ENCODE measurements at regions of chr12 and their contacts with region 1.

Region 1: DNA sequence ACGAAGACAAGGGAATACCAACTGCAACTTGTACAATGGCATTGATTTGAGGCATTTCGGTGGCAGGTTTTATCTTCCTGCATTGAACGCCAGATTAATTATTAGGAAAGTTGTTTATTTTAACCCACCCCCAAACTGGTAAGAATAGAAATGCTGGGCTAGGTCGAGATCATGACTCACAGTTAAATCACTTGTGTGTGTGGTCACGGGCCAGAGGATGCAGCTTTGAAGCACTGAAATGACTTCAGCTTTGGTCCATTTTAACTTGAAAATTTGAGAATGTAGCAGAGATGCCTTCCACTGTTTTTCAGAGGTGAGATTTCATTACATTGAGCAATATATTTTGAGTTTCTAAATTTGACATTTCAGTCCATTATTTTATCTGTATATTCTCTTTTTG is 23.6 kb upstream of the KCNH3 start:
- DNase-seq: no peak
- ATAC-seq: no peak
- H3K4me3 ChIP-seq: no peak overlapping the region
- H3K27ac ChIP-seq: no peak overlapping the region
- H3K4me1 ChIP-seq: peaks cover 0 to 3% (median 0%) of the 10 kb centered on the region in 12 donors
- H3K27me3 ChIP-seq: no peaks in the 10 kb centered on the region
- CTCF ChIP-seq: no peak
- POLR2A ChIP-seq: no peak

Region 2: DNA sequence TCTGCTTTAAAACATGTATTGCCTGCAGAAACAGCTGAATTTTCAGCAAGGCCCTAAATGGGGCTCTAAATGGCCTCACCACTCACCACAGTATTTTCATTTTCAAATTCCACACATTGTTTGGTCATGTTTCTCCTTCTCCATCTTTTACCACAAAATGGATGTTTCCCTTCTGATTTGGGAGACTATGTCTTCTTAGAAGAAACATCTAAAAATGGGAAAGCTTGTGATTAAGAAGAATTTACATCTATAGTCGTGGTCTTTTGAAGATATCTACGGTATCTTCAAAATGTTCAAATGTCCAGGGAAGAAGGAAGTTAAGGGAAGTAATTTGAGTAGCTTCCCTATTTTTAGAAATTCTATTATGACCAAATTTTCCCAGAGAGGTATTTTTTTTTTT is 271.1 kb before region 1 on chr12:
- intact Hi-C with region 1: no loop called
- DNase-seq: no peak
- ATAC-seq: no peak
- H3K4me3 ChIP-seq: no peak overlapping the region
- H3K27ac ChIP-seq: peak overlapping the region in 4 of 12 donors; percentile 20 to 51 (median 36)
- H3K4me1 ChIP-seq: peaks cover 0 to 25% (median 0%) of the 10 kb centered on the region in 12 donors
- H3K27me3 ChIP-seq: no peaks in the 10 kb centered on the region
- CTCF ChIP-seq: no peak
- POLR2A ChIP-seq: no peak

Region 3: DNA sequence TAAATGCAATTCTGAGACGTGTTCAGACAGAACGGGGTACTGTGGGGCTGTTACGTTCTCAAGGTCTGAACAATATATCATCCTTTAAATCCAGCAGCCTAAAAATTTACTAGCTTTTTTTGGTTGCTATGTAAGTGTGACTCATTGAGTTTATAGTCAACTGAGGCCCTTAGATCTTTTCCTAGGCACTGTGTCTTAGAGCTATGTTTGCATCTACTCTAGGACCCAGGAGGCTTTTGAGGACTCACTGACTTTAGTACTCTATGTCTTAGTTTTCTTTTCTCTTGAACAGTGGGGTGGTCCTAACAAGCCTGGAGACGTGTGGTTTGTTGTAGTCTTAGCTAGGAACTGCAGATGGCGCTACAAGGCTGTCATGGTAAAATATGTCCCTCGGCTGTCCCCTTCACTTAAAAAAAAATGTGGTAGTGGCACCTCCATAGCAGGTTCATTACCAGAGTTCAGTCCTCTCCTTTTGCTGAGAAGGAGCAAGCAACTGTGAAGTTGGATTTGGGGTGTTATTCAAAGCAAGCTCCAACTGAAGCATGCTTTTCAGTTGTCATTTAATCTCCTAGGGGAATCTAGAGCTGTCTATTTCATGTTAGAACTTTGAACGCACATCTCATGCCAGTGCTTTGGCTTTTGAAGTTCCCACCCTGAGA is 156.7 kb before region 1 on chr12:
- intact Hi-C with region 1: loop called (anchors 1 to 2 kb)
- DNase-seq: peak in 1 of 5 donors; percentile 54
- ATAC-seq: peak; percentile 69 to 88 (median 85)
- H3K4me3 ChIP-seq: no peak overlapping the region
- H3K27ac ChIP-seq: no peak overlapping the region
- H3K4me1 ChIP-seq: peaks cover 0 to 8% (median 0%) of the 10 kb centered on the region in 12 donors
- H3K27me3 ChIP-seq: peaks cover 0 to 9% (median 2%) of the 10 kb centered on the region in 9 donors
- CTCF ChIP-seq: peak; percentile 73 to 90 (median 81)
- POLR2A ChIP-seq: no peak

Region 4: DNA sequence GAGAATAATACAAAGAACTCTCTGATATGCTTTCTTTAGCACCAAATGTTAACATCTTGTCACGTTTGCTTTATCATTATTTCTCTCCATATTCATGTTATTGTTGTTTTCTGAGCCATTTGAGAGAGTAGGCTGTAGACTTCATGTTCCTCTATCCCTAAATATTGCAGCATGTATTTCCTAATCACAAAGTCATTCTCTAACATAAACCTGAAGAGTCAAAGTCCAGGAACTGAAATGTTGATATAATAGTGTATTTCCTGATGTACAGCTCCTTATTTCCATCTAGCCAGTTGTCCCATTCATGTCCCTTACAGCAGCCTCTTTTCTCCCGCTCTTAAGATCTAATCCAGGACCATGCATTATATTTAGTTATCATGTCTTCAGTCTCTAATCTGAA is 75.2 kb before region 1 on chr12:
- intact Hi-C with region 1: no loop called
- DNase-seq: no peak
- ATAC-seq: no peak
- H3K4me3 ChIP-seq: no peak overlapping the region
- H3K27ac ChIP-seq: no peak overlapping the region
- H3K4me1 ChIP-seq: peaks cover 0 to 8% (median 0%) of the 10 kb centered on the region in 12 donors
- H3K27me3 ChIP-seq: no peaks in the 10 kb centered on the region
- CTCF ChIP-seq: no peak
- POLR2A ChIP-seq: no peak

Measured in heart left ventricle (tissue), 16 donors.